IMR-90 (cell line): ENCODE measurements at regions of chr6 and their contacts with region 1.

Region 1: GRCh38 chr6:125956506-125957390 is at the start of gene HINT3:
- DNase-seq: peak; percentile 98
- ATAC-seq: peak; percentile 93
- H3K4me3 ChIP-seq: peak within 1 kb of the TSS; percentile 72
- H3K27ac ChIP-seq: peak within 1 kb of the TSS; percentile 62
- H3K4me1 ChIP-seq: no peaks in the 10 kb centered on the region
- H3K27me3 ChIP-seq: no peaks in the 10 kb centered on the region
- CTCF ChIP-seq: peak; percentile 97
- POLR2A ChIP-seq: peak; percentile 29; the same call in 1 of the 2 replicates
- RAD21 ChIP-seq: peak; percentile 88
- total RNA-seq, gene HINT3: 6.5 and 9.4 TPM in 2 replicates

Region 2: GRCh38 chr6:125562156-125562555 is 394.6 kb before region 1 on chr6:
- CTCF ChIA-PET with region 1: no interaction called
- POLR2A ChIA-PET with region 1: no interaction called
- dilution Hi-C with region 1: no loop called
- in situ Hi-C with region 1: no loop called
- intact Hi-C with region 1: loop called (anchors 10 kb)
- DNase-seq: no peak
- ATAC-seq: no peak
- H3K4me3 ChIP-seq: no peak overlapping the region
- H3K27ac ChIP-seq: no peak overlapping the region
- H3K4me1 ChIP-seq: no peaks in the 10 kb centered on the region
- H3K27me3 ChIP-seq: peaks cover 4% of the 10 kb centered on the region
- CTCF ChIP-seq: no peak
- POLR2A ChIP-seq: no peak
- RAD21 ChIP-seq: no peak

Region 3: DNA sequence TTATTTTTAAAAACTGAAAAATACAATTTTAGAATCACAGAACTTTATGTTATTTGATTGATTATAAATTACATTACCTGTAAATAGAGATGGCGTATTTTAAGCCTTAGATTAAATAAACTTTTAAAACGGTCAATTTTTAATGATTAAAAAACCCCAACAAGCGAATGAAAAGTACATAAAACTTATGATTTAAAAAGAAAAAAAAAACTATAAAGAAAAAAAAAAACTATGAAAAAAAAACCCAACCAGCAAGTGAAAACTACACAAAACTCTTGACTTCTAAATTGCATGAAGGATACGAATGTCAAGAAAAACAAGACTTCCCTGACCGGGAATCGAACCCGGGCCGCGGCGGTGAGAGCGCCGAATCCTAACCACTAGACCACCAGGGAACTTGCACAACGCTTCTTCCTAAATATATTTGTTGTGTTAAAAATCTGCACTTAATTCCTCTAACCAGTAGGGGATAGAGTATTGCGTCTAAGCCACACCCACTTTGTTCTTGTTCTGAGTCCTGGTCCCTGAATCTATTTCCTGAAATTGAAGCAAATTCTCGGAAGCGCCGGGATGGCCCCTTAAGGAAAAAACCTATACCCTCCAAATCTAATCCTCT is 176.7 kb before region 1 on chr6:
- CTCF ChIA-PET with region 1: interaction called, 10 read pairs
- POLR2A ChIA-PET with region 1: interaction called, 4 read pairs
- dilution Hi-C with region 1: no loop called
- in situ Hi-C with region 1: loop called (anchors 5 kb)
- intact Hi-C with region 1: no loop called
- DNase-seq: peak; percentile 92
- ATAC-seq: peak; percentile 89
- H3K4me3 ChIP-seq: peak overlapping the region; percentile 59
- H3K27ac ChIP-seq: no peak overlapping the region
- H3K4me1 ChIP-seq: no peaks in the 10 kb centered on the region
- H3K27me3 ChIP-seq: peaks cover 5% of the 10 kb centered on the region; the same call in 1 of the 2 replicates
- CTCF ChIP-seq: peak; percentile 28; the same call in 1 of the 2 replicates
- POLR2A ChIP-seq: peak; percentile 58; the same call in 1 of the 2 replicates
- RAD21 ChIP-seq: no peak

Region 4: GRCh38 chr6:125790358-125791150 is 166.2 kb before region 1 on chr6 and contains the start of gene NCOA7:
- CTCF ChIA-PET with region 1: interaction called, 45 read pairs
- POLR2A ChIA-PET with region 1: interaction called, 4 read pairs
- dilution Hi-C with region 1: no loop called
- in situ Hi-C with region 1: loop called (anchors 5 kb)
- intact Hi-C with region 1: loop called (anchors 1 kb)
- DNase-seq: peak; percentile 67
- ATAC-seq: peak; percentile 94
- H3K4me3 ChIP-seq: peak within 1 kb of the TSS; percentile 83
- H3K27ac ChIP-seq: peak within 1 kb of the TSS; percentile 82
- H3K4me1 ChIP-seq: peaks cover 8% of the 10 kb centered on the region
- H3K27me3 ChIP-seq: no peaks in the 10 kb centered on the region
- CTCF ChIP-seq: 0 out of 2 replicates have a peak, but pooled peaks have one; percentile 14
- POLR2A ChIP-seq: peak; percentile 28
- RAD21 ChIP-seq: no peak
- total RNA-seq, gene NCOA7: 12.9 and 17.2 TPM in 2 replicates

Region 5: GRCh38 chr6:125858427-125859320 is 98.1 kb before region 1 on chr6:
- CTCF ChIA-PET with region 1: interaction called, 14 read pairs
- POLR2A ChIA-PET with region 1: no interaction called
- dilution Hi-C with region 1: no loop called
- in situ Hi-C with region 1: no loop called
- intact Hi-C with region 1: loop called (anchors 5 kb)
- DNase-seq: peak; percentile 80
- ATAC-seq: peak; percentile 96
- H3K4me3 ChIP-seq: no peak overlapping the region
- H3K27ac ChIP-seq: no peak overlapping the region
- H3K4me1 ChIP-seq: no peaks in the 10 kb centered on the region
- H3K27me3 ChIP-seq: no peaks in the 10 kb centered on the region
- CTCF ChIP-seq: peak; percentile 80
- POLR2A ChIP-seq: no peak
- RAD21 ChIP-seq: peak; percentile 82

Region 6: GRCh38 chr6:125906158-125906998 is 50.4 kb before region 1 on chr6:
- CTCF ChIA-PET with region 1: interaction called, 7 read pairs
- POLR2A ChIA-PET with region 1: no interaction called
- dilution Hi-C with region 1: no loop called
- in situ Hi-C with region 1: no loop called
- intact Hi-C with region 1: loop called (anchors 2 kb)
- DNase-seq: peak; percentile 27
- ATAC-seq: peak; percentile 66
- H3K4me3 ChIP-seq: no peak overlapping the region
- H3K27ac ChIP-seq: no peak overlapping the region
- H3K4me1 ChIP-seq: no peaks in the 10 kb centered on the region; the same call in 1 of the 2 replicates
- H3K27me3 ChIP-seq: no peaks in the 10 kb centered on the region
- CTCF ChIP-seq: peak; percentile 58
- POLR2A ChIP-seq: no peak
- RAD21 ChIP-seq: peak; percentile 45

Region 7: DNA sequence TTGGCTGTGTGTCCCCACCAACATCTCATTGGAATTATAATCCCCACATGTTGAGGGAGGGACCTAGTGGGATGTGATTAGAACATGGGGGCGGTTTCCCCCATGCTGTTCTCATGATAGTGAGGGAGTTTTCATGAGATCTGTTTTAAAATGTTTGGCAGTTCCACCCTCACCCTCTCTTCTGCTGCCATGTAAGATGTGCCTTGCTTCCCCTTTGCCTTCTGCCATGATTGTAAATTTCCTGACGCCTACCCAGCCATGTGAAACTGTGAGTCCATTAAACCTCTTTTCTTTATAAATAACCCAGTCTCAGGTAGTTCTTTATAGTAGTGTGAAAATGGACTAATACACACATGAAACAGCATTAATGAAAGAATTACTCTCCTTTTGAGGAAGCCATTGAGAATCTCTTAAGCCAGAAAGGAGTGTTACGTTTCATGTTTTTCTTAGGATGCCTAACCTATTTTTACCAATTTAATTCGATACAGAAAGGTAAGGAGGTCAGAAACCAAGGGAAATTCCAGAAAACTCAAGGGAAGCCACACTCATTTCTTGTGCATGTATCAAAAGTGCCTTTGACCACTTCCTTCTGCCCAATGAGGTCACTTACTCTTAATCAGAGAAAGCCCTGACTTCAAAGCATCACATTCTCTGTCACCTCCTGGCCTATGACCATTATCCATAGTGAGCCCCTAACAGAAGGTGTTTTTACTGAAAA is 24.9 kb before region 1 on chr6:
- CTCF ChIA-PET with region 1: no interaction called
- POLR2A ChIA-PET with region 1: no interaction called
- dilution Hi-C with region 1: no loop called
- in situ Hi-C with region 1: no loop called
- intact Hi-C with region 1: no loop called
- DNase-seq: peak; percentile 81
- ATAC-seq: no peak
- H3K4me3 ChIP-seq: no peak overlapping the region
- H3K27ac ChIP-seq: no peak overlapping the region
- H3K4me1 ChIP-seq: peaks cover 5% of the 10 kb centered on the region; the same call in 1 of the 2 replicates
- H3K27me3 ChIP-seq: no peaks in the 10 kb centered on the region
- CTCF ChIP-seq: no peak
- POLR2A ChIP-seq: peak; percentile 33; the same call in 1 of the 2 replicates
- RAD21 ChIP-seq: no peak